ENCODE measurements at regions of chr11 and their contacts with region 1.

Region 1: DNA sequence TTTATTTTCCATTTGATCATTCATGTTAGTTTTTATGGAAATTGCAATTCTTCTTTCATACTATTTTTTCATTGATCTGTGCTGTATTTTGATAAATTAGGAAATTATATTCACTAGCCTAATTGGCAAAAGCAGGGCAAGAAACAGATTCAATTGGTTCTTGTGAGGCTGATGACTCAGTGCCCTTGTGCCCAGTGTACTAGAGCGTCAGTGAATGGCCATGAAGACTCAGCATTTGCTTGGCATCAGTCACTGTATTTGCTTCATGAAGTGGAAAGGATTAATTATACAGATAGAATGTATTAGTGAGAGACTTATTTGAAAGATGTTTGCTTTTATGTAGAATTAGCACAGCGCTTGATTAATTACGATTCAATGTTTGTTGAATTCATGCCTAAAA is 31.8 kb downstream of the MRGPRX1 start:
- DNase-seq: no peak
- ATAC-seq: no peak
- H3K4me3 ChIP-seq: no peak overlapping the region
- H3K27ac ChIP-seq: no peak overlapping the region
- H3K4me1 ChIP-seq: no peaks in the 10 kb centered on the region
- H3K27me3 ChIP-seq: no peaks in the 10 kb centered on the region
- CTCF ChIP-seq: no peak
- POLR2A ChIP-seq: no peak

Region 2: GRCh38 chr11:18958221-18958910 is 51.0 kb after region 1 on chr11:
- intact Hi-C with region 1: loop called in 1 of 10 experiments (anchors 5 kb)
- DNase-seq: no peak
- ATAC-seq: no peak
- H3K4me3 ChIP-seq: no peak overlapping the region
- H3K27ac ChIP-seq: no peak overlapping the region
- H3K4me1 ChIP-seq: no peaks in the 10 kb centered on the region
- H3K27me3 ChIP-seq: no peaks in the 10 kb centered on the region
- CTCF ChIP-seq: no peak
- POLR2A ChIP-seq: no peak

Region 3: DNA sequence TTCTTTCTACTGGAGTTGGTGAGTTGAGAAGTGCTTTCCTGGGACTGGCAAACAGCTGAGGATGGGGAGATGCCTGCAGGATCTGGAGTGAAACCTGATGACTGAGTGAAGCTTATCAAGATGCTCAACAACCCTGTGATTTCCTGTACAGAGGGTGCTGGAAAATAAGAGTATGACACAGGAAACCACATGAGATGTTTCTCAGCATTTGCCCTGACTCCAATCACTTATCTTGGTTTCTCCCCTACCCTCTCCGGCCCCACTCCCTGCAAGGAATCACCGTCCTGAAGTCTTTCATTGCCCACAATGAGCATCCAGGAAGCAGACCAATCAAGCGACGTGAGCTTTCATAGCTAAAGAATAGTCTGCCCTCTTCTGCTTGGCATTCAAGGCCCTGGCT is 153.2 kb after region 1 on chr11 and contains the start of gene MRGPRX2:
- intact Hi-C with region 1: no loop called
- DNase-seq: no peak
- ATAC-seq: no peak
- H3K4me3 ChIP-seq: no peak within 1 kb of the TSS
- H3K27ac ChIP-seq: no peak within 1 kb of the TSS
- H3K4me1 ChIP-seq: no peaks in the 10 kb centered on the region
- H3K27me3 ChIP-seq: peaks cover 0 to 9% (median 0%) of the 10 kb centered on the region in 9 donors
- CTCF ChIP-seq: no peak
- POLR2A ChIP-seq: no peak
- total RNA-seq, gene MRGPRX2: 0.13 TPM in 1 of 9 donors, not detected in the others

Region 4: GRCh38 chr11:19209617-19210370 is 302.4 kb after region 1 on chr11:
- intact Hi-C with region 1: no loop called
- DNase-seq: no peak
- ATAC-seq: peak; percentile 89 to 93 (median 90)
- H3K4me3 ChIP-seq: peak overlapping the region in 9 of 12 donors; percentile 19 to 49 (median 42)
- H3K27ac ChIP-seq: peak overlapping the region; percentile 47 to 95 (median 79)
- H3K4me1 ChIP-seq: peaks cover 0 to 17% (median 0%) of the 10 kb centered on the region in 12 donors
- H3K27me3 ChIP-seq: peaks cover 0 to 9% (median 0%) of the 10 kb centered on the region in 9 donors
- CTCF ChIP-seq: peak in 1 of 12 donors; percentile 20
- POLR2A ChIP-seq: no peak